ENCODE measurements at regions of chr14 and their contacts with region 1.

Region 1: DNA sequence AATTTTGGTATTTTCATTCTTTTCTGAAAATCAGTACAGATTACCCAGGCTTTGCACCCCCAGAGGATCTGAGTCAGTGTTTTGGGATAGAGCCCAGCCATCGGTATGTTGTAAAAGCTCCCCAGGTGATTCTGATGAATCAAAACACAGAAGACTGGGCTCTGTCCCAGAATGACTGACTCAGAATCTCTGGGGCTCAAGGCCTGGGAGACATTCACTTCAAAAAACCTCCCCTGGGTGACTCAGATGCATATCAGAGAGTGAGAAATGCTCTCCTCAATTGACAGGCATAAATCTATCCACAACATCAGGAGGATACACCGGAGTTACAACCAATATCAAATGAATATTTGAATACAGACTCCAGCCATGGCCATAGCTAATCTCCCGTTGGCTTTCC is 32.6 kb downstream of the SLC35F4 start:
- DNase-seq: peak; percentile 99
- H3K4me3 Mint-ChIP-seq: no peak overlapping the region
- H3K27ac Mint-ChIP-seq: no peak overlapping the region
- H3K4me1 Mint-ChIP-seq: peaks cover 47% of the 10 kb centered on the region
- H3K27me3 Mint-ChIP-seq: no peaks in the 10 kb centered on the region
- CTCF ChIP-seq: no peak

Region 2: GRCh38 chr14:57704763-57705162 is 128.6 kb before region 1 on chr14:
- CTCF ChIA-PET with region 1: no interaction called
- POLR2A ChIA-PET with region 1: no interaction called
- intact Hi-C with region 1: no loop called
- DNase-seq: no peak
- H3K4me3 Mint-ChIP-seq: no peak overlapping the region
- H3K27ac Mint-ChIP-seq: no peak overlapping the region
- H3K4me1 Mint-ChIP-seq: no peaks in the 10 kb centered on the region
- H3K27me3 Mint-ChIP-seq: no peaks in the 10 kb centered on the region
- CTCF ChIP-seq: no peak

Region 3: GRCh38 chr14:57747036-57747435 is 86.3 kb before region 1 on chr14:
- CTCF ChIA-PET with region 1: no interaction called
- POLR2A ChIA-PET with region 1: interaction called, 5 read pairs
- intact Hi-C with region 1: loop called (anchors 2 kb)
- DNase-seq: peak; percentile 36
- H3K4me3 Mint-ChIP-seq: no peak overlapping the region
- H3K27ac Mint-ChIP-seq: peak overlapping the region; percentile 46
- H3K4me1 Mint-ChIP-seq: peaks cover 30% of the 10 kb centered on the region
- H3K27me3 Mint-ChIP-seq: no peaks in the 10 kb centered on the region
- CTCF ChIP-seq: no peak

Region 4: GRCh38 chr14:57822081-57822480 is 11.2 kb before region 1 on chr14:
- CTCF ChIA-PET with region 1: no interaction called
- POLR2A ChIA-PET with region 1: interaction called, 12 read pairs
- intact Hi-C with region 1: no loop called
- DNase-seq: peak; percentile 62
- H3K4me3 Mint-ChIP-seq: no peak overlapping the region
- H3K27ac Mint-ChIP-seq: no peak overlapping the region
- H3K4me1 Mint-ChIP-seq: peaks cover 17% of the 10 kb centered on the region
- H3K27me3 Mint-ChIP-seq: no peaks in the 10 kb centered on the region
- CTCF ChIP-seq: no peak

Region 5: GRCh38 chr14:58488550-58488949 is 655.2 kb after region 1 on chr14:
- CTCF ChIA-PET with region 1: no interaction called
- POLR2A ChIA-PET with region 1: no interaction called
- intact Hi-C with region 1: no loop called
- DNase-seq: peak; percentile 45
- H3K4me3 Mint-ChIP-seq: no peak overlapping the region
- H3K27ac Mint-ChIP-seq: no peak overlapping the region
- H3K4me1 Mint-ChIP-seq: no peaks in the 10 kb centered on the region
- H3K27me3 Mint-ChIP-seq: no peaks in the 10 kb centered on the region
- CTCF ChIP-seq: no peak